ENCODE measurements at regions of chr14 and their contacts with region 1.

Region 1: GRCh38 chr14:84555493-84555892 is 974.5 kb upstream of the FLRT2 start:
- DNase-seq: no peak
- H3K4me3 ChIP-seq: no peak overlapping the region
- H3K27me3 ChIP-seq: no peaks in the 10 kb centered on the region
- CTCF ChIP-seq: no peak

Region 2: DNA sequence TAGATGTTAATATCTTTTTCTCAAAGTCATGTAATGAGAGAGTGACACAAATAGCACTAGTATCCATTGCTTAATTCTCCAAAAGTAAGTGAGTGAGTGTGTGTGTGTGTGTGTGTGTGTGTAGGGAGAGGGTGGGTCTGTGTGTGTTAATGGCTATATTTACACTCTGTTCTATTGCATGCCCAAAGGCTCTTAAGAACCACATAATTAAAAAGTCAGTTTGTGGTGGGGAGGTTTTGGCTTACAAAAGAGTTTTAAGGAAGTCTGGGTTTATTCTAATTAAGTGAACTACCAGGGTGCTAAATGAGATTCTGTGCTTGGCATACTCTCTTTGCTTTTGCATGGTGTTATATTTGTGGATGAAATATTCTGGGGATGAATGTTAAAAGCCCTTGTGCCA is 923.1 kb before region 1 on chr14:
- CTCF ChIA-PET with region 1: no interaction called
- POLR2A ChIA-PET with region 1: interaction called, 18 read pairs
- DNase-seq: no peak
- H3K4me3 ChIP-seq: no peak overlapping the region
- H3K27me3 ChIP-seq: no peaks in the 10 kb centered on the region
- CTCF ChIP-seq: no peak

Measured in BJ (cell line).